ENCODE measurements at regions of chr13 and their contacts with region 1.

Region 1: DNA sequence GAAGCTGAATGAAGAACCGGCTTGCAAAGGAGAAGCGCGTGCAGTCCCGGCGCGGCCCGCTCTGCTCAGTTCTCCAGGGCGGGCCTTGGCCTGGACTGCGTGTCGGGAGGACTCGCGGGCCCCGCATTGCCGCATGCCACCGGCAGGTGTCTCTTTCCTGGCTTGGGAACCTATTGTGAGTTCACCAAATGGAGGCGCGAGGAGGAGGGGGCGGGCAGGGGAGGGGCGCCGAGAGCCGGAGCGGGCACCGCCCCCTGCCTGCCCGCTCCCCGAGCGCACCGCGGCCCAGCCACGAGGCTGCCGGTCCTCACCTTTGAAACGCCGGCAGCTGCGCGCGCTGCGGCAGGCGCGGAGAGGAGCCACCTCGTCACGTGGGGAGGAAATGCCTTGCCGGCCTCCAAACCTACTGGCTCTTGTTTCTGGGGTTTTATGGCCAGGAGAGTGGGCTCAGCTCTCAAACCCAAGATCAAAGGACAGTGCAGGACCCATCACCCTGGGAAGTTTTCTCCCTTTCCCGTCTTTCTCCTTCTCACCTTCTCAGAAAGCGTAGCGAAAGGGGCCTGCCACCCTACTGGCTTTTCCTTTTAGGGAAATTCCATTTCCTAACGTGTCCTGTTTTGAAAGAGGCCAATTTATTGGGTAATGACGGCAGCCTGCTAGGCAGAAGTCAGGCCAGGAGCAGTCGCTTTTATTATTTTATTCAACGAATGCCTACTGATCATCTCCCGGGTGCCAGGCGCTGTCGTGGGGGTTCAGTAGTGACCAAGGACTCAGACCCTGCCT is 13.8 kb upstream of the UBE2L5 start:
- DNase-seq: peak; percentile 93
- H3K4me3 Mint-ChIP-seq: peak overlapping the region; percentile 55
- H3K27ac Mint-ChIP-seq: peak overlapping the region; percentile 84
- H3K4me1 Mint-ChIP-seq: peaks cover 12% of the 10 kb centered on the region
- H3K27me3 Mint-ChIP-seq: no peaks in the 10 kb centered on the region
- CTCF ChIP-seq: peak; percentile 59

Region 2: GRCh38 chr13:29595380-29596063 is 813.0 kb before region 1 on chr13 and contains the start of gene SLC7A1:
- CTCF ChIA-PET with region 1: no interaction called
- POLR2A ChIA-PET with region 1: no interaction called
- intact Hi-C with region 1: no loop called
- DNase-seq: peak; percentile 83
- H3K4me3 Mint-ChIP-seq: peak within 1 kb of the TSS; percentile 86
- H3K27ac Mint-ChIP-seq: peak within 1 kb of the TSS; percentile 94
- H3K4me1 Mint-ChIP-seq: peaks cover 32% of the 10 kb centered on the region
- H3K27me3 Mint-ChIP-seq: no peaks in the 10 kb centered on the region
- CTCF ChIP-seq: no peak
- total RNA-seq, gene SLC7A1: 154 and 194 TPM in 2 replicates

Region 3: DNA sequence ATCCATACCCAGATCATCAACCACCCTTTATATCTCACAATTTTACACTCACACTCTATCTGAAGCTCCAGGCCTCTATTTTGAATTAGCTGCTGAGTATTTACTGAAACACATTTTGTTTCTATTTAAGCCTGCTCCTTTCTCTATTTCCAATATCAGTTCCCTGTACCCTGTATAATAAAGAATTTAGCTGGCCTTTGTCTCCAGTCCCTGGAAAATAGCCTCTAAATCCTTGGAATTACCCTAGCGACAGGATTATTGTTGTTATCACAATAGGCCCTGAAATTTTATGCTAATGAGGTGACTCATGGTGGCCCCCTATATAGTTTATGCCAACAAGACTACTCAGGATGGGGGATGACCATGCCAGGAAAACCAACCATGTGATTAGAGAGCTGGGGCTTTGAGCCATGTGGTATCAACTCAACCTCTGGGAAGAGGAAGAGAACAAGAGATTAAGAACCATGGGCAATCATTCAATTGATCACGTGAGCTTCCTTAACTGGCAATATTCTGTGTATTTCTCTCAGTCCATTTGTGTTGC is 173.8 kb before region 1 on chr13:
- CTCF ChIA-PET with region 1: no interaction called
- POLR2A ChIA-PET with region 1: no interaction called
- intact Hi-C with region 1: no loop called
- DNase-seq: no peak
- H3K4me3 Mint-ChIP-seq: no peak overlapping the region
- H3K27ac Mint-ChIP-seq: no peak overlapping the region
- H3K4me1 Mint-ChIP-seq: no peaks in the 10 kb centered on the region
- H3K27me3 Mint-ChIP-seq: no peaks in the 10 kb centered on the region
- CTCF ChIP-seq: no peak

Region 4: DNA sequence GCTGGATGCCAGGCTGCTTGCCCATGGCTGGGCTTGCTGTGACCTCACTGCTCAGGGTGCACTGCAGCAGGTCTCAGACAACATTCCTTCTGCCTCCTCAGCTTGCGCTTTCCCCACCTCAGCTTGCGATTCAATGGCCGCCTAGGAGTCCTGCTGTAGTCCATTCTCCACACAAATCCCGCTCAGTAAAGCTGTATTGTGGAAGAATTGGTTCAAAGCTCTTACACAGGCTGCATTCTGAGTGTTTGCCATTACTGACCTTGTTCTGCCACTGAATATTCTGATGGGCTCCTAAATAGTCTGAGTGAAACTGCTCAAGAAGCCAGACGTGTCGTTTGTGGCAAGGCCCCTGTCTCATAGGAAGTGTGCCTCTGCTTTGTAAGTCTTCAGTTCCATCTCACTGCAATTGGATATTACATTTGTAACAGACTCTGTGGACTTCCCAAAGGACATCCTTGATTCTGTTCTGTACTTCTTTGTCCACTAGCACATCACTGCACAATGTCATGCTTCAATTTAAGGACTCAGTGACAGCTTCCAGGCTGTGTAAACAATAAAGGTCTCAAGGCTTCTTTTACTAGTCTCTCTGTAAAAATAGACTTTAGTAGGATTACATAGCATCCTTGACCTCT is 150.9 kb before region 1 on chr13:
- CTCF ChIA-PET with region 1: interaction called, 3 read pairs
- POLR2A ChIA-PET with region 1: no interaction called
- intact Hi-C with region 1: loop called (anchors 5 kb)
- DNase-seq: no peak
- H3K4me3 Mint-ChIP-seq: no peak overlapping the region
- H3K27ac Mint-ChIP-seq: no peak overlapping the region
- H3K4me1 Mint-ChIP-seq: no peaks in the 10 kb centered on the region
- H3K27me3 Mint-ChIP-seq: no peaks in the 10 kb centered on the region
- CTCF ChIP-seq: no peak

Region 5: GRCh38 chr13:30422054-30422839 is 13.7 kb after region 1 on chr13 and contains the start of gene UBE2L5:
- CTCF ChIA-PET with region 1: interaction called, 9 read pairs
- POLR2A ChIA-PET with region 1: interaction called, 53 read pairs
- intact Hi-C with region 1: no loop called
- DNase-seq: peak; percentile 76
- H3K4me3 Mint-ChIP-seq: peak within 1 kb of the TSS; percentile 73
- H3K27ac Mint-ChIP-seq: peak within 1 kb of the TSS; percentile 47
- H3K4me1 Mint-ChIP-seq: peaks cover 7% of the 10 kb centered on the region
- H3K27me3 Mint-ChIP-seq: no peaks in the 10 kb centered on the region
- CTCF ChIP-seq: no peak
- total RNA-seq, gene UBE2L5: not detected in 2 replicates

Region 6: DNA sequence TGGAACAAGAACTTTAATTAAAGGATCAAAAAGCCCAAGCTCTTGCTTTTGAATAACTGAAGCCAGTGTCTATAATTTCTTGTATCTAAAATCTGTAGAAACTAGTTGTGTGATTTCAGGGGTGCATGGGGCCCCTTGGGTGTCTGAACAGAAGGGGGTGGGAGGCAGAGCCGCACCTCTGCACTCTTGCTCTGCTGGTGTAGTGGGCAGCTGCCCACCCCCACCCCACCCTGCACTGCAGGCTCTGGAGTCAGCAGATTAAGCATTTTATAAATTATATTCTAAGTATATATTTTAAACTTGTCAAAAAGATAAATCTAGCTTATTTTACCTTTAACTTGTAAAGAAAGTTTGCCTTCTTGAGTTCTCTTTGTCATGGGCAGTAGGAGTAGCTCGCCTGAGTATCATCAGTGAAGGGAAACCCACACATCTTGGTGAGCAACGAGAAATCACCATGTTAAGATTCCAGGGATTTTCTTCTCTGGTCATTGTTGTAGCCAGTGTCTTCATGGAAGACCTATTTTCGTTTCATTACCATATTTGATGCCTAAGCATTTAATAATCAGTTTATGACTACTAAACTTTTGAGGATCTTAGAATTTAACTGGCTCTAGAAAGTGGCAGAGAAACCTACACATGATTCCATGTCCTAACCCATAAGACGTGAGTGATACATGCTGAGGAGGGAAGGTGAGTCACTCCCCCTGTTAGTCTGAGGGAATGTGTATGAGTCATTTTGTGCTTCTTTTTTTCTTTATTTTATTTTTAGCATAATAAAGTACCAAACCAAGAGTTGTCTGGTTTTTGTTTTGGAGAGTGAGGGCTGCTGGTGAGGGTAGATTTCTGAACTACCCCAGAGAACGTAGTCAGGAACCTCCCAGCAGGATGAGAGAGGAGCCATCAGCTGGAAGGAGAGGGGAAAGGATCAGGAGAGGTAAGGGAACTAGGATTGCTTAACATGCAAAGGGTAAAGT is 21.5 kb after region 1 on chr13:
- CTCF ChIA-PET with region 1: interaction called, 4 read pairs
- POLR2A ChIA-PET with region 1: interaction called, 19 read pairs
- intact Hi-C with region 1: no loop called
- DNase-seq: peak; percentile 89
- H3K4me3 Mint-ChIP-seq: peak overlapping the region; percentile 32
- H3K27ac Mint-ChIP-seq: peak overlapping the region; percentile 57
- H3K4me1 Mint-ChIP-seq: peaks cover 13% of the 10 kb centered on the region
- H3K27me3 Mint-ChIP-seq: no peaks in the 10 kb centered on the region
- CTCF ChIP-seq: no peak

Region 7: DNA sequence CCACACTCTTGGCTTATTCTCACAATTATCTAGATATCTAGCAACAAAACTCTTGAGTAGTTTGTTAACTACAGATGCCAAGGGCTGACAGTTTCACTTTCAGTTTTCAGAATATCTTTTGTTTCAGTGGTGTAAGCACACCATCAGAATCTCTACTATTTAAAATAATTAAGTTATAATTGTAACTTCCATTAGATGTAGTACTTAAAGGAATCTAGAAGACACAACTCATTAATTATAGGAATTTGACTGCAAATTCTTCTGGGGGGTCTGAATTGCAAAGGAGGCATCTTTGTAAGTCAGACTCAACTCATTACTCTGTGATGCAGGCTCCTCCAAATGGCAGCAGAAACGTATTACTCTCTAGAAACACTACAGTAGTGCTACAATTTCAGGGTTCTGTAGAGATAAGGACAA is 164.4 kb after region 1 on chr13:
- CTCF ChIA-PET with region 1: no interaction called
- POLR2A ChIA-PET with region 1: no interaction called
- intact Hi-C with region 1: loop called (anchors 5 kb)
- DNase-seq: peak; percentile 54
- H3K4me3 Mint-ChIP-seq: peak overlapping the region; percentile 68
- H3K27ac Mint-ChIP-seq: peak overlapping the region; percentile 89
- H3K4me1 Mint-ChIP-seq: peaks cover 38% of the 10 kb centered on the region
- H3K27me3 Mint-ChIP-seq: no peaks in the 10 kb centered on the region
- CTCF ChIP-seq: peak; percentile 24

Region 8: GRCh38 chr13:30802953-30803478 is 394.5 kb after region 1 on chr13:
- CTCF ChIA-PET with region 1: no interaction called
- POLR2A ChIA-PET with region 1: no interaction called
- intact Hi-C with region 1: loop called (anchors 5 kb)
- DNase-seq: peak; percentile 80
- H3K4me3 Mint-ChIP-seq: peak overlapping the region; percentile 68
- H3K27ac Mint-ChIP-seq: peak overlapping the region; percentile 7
- H3K4me1 Mint-ChIP-seq: peaks cover 11% of the 10 kb centered on the region
- H3K27me3 Mint-ChIP-seq: no peaks in the 10 kb centered on the region
- CTCF ChIP-seq: peak; percentile 96